Activated T-helper 1 cell treated with anti-CD3 and anti-CD28 coated beads, Interleukin-12 subunit alpha, Interleukin-12 subunit beta, Interleukin-2, Interleukin-4 antibody, amounts not matched to agents 30 ng/mL and 10 ng/mL and 1 ng/mL, durations not matched to agents 14 hours and 24 hours and 36 hours (primary cell): ENCODE measurements at regions of chrX and their contacts with region 1.

Region 1: DNA sequence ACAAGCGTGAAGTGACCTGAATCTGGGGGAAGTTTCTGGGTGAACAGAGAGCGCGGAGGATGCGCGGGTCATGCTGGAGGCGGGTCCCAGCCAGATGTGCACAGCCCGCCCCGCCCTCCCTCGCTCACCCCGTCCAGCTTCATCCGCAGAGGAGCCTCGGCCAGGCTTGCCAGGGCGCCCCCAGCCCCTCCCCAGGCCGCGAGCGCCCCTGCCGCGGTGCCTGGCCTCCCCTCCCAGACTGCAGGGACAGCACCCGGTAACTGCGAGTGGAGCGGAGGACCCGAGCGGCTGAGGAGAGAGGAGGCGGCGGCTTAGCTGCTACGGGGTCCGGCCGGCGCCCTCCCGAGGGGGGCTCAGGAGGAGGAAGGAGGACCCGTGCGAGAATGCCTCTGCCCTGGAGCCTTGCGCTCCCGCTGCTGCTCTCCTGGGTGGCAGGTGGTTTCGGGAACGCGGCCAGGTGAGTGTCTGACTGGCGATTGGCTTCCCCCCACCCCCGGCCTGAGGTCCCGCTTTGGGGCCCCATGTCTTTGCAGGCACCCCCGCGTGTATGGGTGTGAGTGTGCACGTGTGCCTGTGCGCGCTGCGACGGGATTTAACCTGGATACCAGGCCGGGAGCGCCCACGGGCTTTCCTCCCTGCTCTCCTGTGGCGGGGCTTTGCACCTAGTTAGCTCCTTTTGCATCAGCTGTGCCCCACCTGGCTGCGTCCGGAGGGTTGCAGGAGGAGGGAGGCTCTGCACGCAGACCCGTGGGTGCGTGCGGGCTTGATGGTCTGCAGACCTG is at the start of gene EGFL6:
- DNase-seq: no peak
- H3K4me3 Mint-ChIP-seq: peak within 1 kb of the TSS; percentile 75
- H3K27ac Mint-ChIP-seq: no peak within 1 kb of the TSS
- H3K4me1 Mint-ChIP-seq: peaks cover 23% of the 10 kb centered on the region
- H3K27me3 Mint-ChIP-seq: peaks cover 6% of the 10 kb centered on the region
- total RNA-seq, gene EGFL6: 2.0 and 2.5 TPM in 2 replicates

Region 2: DNA sequence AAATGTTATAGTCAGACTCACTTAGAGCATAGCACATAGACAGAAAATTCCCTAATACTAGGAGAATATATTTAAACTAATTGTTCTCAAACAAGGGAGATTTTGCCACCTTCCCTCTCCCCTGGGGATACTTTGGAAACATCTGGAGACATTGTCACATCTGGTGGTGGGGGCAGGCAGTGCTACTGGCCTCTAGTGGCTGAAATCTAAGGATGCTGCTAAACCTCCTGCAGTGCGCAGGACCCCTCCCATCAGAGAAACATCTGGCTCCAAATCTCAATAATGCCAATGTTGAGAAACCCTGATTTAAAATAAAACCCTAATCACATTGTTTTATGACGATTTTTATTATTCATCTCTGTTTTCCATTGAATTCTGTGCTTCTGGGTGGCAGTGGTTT is 1186.5 kb before region 1 on chrX:
- intact Hi-C with region 1: no loop called
- DNase-seq: no peak
- H3K4me3 Mint-ChIP-seq: no peak overlapping the region
- H3K27ac Mint-ChIP-seq: no peak overlapping the region
- H3K4me1 Mint-ChIP-seq: no peaks in the 10 kb centered on the region
- H3K27me3 Mint-ChIP-seq: no peaks in the 10 kb centered on the region

Region 3: GRCh38 chrX:13587786-13588477 is 18.3 kb after region 1 on chrX:
- intact Hi-C with region 1: no loop called
- DNase-seq: no peak
- H3K4me3 Mint-ChIP-seq: no peak overlapping the region
- H3K27ac Mint-ChIP-seq: no peak overlapping the region
- H3K4me1 Mint-ChIP-seq: no peaks in the 10 kb centered on the region
- H3K27me3 Mint-ChIP-seq: peaks cover 6% of the 10 kb centered on the region

Region 4: DNA sequence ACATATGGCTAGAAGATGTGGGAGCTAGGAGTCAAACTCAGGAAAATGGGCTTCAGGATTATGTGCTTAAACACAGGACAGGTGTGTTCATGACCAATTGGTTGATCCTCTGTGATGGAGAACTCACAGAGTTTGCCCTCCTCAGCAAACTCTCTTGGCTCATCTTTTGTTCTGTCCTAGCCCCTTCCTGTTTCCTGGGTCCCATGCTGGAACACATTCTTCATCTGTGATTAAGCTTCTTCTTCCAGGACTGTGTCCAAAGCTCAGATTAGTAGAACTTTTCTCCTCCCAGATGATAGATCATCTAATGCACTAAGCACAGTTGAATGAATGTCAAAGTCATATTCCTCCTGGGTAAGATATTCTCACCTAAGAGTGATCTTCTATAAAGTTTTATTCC is 44.5 kb after region 1 on chrX:
- intact Hi-C with region 1: loop called (anchors 2 kb)
- DNase-seq: no peak
- H3K4me3 Mint-ChIP-seq: no peak overlapping the region
- H3K27ac Mint-ChIP-seq: no peak overlapping the region
- H3K4me1 Mint-ChIP-seq: peaks cover 4% of the 10 kb centered on the region
- H3K27me3 Mint-ChIP-seq: no peaks in the 10 kb centered on the region

Region 5: DNA sequence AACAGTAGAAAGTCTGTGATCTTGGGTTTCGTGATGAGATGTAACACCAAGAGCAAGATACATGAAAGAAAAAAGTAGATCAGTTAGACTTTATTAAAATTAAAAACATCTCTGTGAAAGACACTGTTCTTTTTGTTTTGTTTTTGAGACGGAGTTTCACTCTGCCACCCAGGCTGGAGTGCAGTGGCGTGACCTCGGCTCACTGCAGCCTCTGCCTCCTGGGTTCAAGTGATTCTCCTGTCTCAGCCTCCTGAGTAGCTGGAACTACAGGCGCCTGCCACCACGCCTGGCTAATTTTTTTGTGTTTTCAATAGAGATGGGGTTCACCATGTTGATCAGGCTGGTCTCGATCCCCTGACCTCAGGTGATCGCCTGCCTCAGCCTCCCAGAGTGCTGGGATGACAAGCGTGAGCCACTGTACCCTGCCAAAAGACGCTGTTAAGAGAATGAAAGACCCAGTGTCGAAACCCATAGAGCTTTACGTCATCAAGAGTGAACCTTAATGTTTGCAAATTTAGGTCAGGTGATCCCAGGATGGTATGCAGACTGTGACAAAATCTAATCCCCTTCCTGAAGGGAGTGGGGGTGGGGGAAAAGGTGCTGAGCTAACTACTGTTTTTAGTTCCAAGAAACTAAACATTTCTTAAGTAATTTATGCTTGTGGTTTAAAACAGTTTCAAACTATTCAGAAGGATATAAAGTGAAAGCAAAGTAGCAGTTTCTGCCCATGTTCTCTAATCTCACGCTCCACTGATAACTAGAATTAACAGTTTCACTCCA is 172.9 kb after region 1 on chrX:
- intact Hi-C with region 1: loop called (anchors 5 kb)
- DNase-seq: peak; percentile 8
- H3K4me3 Mint-ChIP-seq: peak overlapping the region; percentile 51
- H3K27ac Mint-ChIP-seq: peak overlapping the region; percentile 55
- H3K4me1 Mint-ChIP-seq: peaks cover 21% of the 10 kb centered on the region
- H3K27me3 Mint-ChIP-seq: no peaks in the 10 kb centered on the region